ENCODE measurements at regions of chr2 and their contacts with region 1.

Region 1: DNA sequence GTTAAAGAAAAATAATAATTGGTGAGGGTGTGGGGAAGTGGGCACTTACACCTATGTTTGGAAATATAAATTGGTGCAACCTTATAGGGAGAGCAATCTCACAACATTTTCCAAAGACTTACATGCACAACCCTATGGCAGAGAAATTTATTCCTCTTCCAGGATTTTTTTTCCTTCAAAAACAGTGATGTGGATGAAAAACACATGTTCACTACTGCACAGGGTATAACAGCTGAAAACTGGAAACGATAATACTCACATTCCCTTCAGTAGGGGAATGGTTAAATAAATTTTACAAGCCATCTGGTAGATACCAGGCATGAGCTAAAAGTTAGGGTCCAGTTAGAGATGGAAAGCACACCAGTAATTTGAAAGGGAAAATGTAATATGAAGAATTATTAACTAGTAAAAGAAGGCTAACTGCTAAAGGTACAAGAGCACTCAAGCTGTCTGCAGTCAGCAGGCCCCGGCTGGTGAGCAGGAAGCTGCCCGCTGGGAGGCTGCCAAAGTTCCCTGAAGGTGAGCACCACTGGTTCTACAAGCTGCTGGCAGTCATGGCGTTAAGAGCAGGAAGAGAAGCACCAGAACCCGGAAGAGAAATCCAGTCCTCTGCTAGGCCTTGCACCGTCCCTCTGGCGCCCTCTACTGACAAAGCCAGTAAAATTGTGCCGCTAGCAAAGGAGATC is 28.4 kb upstream of the CASP8 start:
- DNase-seq: peak; percentile 62 to 78 (median 71)
- H3K4me3 ChIP-seq: no peak overlapping the region
- H3K27ac ChIP-seq: no peak overlapping the region
- H3K4me1 ChIP-seq: peaks cover 5% of the 10 kb centered on the region
- H3K27me3 ChIP-seq: no peaks in the 10 kb centered on the region
- CTCF ChIP-seq: peak in 2 of 3 donors; percentile 19 to 47
- EP300 ChIP-seq: no peak
- POLR2A ChIP-seq: no peak

Region 2: GRCh38 chr2:201118121-201118960 is 113.6 kb before region 1 on chr2:
- intact Hi-C with region 1: no loop called
- DNase-seq: peak; percentile 74 to 85 (median 80)
- H3K4me3 ChIP-seq: peak overlapping the region; percentile 70
- H3K27ac ChIP-seq: peak overlapping the region; percentile 24 to 98
- H3K4me1 ChIP-seq: peaks cover 7% of the 10 kb centered on the region
- H3K27me3 ChIP-seq: no peaks in the 10 kb centered on the region
- CTCF ChIP-seq: peak; percentile 25 to 63 (median 34)
- EP300 ChIP-seq: no peak
- POLR2A ChIP-seq: peak; percentile 24

Region 3: GRCh38 chr2:201242571-201243277 is 10.8 kb after region 1 on chr2:
- intact Hi-C with region 1: no loop called
- DNase-seq: no peak
- H3K4me3 ChIP-seq: no peak overlapping the region
- H3K27ac ChIP-seq: no peak overlapping the region
- H3K4me1 ChIP-seq: no peaks in the 10 kb centered on the region
- H3K27me3 ChIP-seq: no peaks in the 10 kb centered on the region
- CTCF ChIP-seq: no peak
- EP300 ChIP-seq: no peak
- POLR2A ChIP-seq: no peak

Region 4: GRCh38 chr2:201532686-201533304 is 300.9 kb after region 1 on chr2:
- intact Hi-C with region 1: no loop called
- DNase-seq: no peak
- H3K4me3 ChIP-seq: no peak overlapping the region
- H3K27ac ChIP-seq: no peak overlapping the region
- H3K4me1 ChIP-seq: no peaks in the 10 kb centered on the region
- H3K27me3 ChIP-seq: no peaks in the 10 kb centered on the region
- CTCF ChIP-seq: no peak
- EP300 ChIP-seq: no peak
- POLR2A ChIP-seq: no peak

Region 5: GRCh38 chr2:201618744-201619662 is 387.1 kb after region 1 on chr2:
- intact Hi-C with region 1: loop called in 2 of 4 experiments (anchors 5 to 10 kb)
- DNase-seq: peak; percentile 79 to 89 (median 82)
- H3K4me3 ChIP-seq: no peak overlapping the region
- H3K27ac ChIP-seq: no peak overlapping the region
- H3K4me1 ChIP-seq: no peaks in the 10 kb centered on the region
- H3K27me3 ChIP-seq: no peaks in the 10 kb centered on the region
- CTCF ChIP-seq: peak in 2 of 3 donors; percentile 29 to 34
- EP300 ChIP-seq: no peak
- POLR2A ChIP-seq: no peak

Region 6: GRCh38 chr2:202408546-202409140 is 1176.7 kb after region 1 on chr2:
- intact Hi-C with region 1: loop called in 1 of 4 experiments (anchors 10 kb)
- DNase-seq: no peak
- H3K4me3 ChIP-seq: no peak overlapping the region
- H3K27ac ChIP-seq: no peak overlapping the region
- H3K4me1 ChIP-seq: no peaks in the 10 kb centered on the region
- H3K27me3 ChIP-seq: no peaks in the 10 kb centered on the region
- CTCF ChIP-seq: no peak
- EP300 ChIP-seq: no peak
- POLR2A ChIP-seq: no peak